Mucosa of descending colon (tissue), 3 donors: ENCODE measurements at regions of chr12 and their contacts with region 1.

Region 1: DNA sequence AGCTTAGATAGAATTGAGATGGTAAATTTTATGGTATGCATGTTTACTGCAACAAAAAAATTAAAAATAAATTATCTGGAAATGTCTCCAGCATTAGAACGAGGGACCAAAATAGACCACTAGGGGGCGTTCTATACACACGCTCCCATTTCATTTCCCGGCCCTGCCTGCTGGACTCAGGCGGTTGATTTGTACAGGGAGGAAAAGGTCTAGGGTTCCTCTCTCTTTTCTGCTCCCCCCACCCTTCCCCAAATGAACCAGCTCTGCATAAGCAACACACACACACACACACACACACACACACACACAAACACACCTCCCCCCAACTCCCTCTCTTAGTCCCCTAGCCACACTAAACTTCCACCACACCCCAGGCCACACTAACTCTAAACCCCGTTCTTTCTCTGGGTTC is 7.8 kb upstream of the DTX1 start:
- DNase-seq: peak in 1 of 3 donors; percentile 85
- ATAC-seq: peak; percentile 91
- H3K4me3 ChIP-seq: no peak overlapping the region
- H3K4me1 ChIP-seq: no peaks in the 10 kb centered on the region
- CTCF ChIP-seq: peak; percentile 78

Region 2: GRCh38 chr12:113152835-113153814 is 104.4 kb after region 1 on chr12:
- intact Hi-C with region 1: loop called (anchors 5 to 10 kb)
- DNase-seq: peak; percentile 76 to 86 (median 80)
- ATAC-seq: peak; percentile 89
- H3K4me3 ChIP-seq: no peak overlapping the region
- H3K4me1 ChIP-seq: peaks cover 24% of the 10 kb centered on the region
- CTCF ChIP-seq: peak; percentile 50

Region 3: GRCh38 chr12:113174461-113175384 is 126.0 kb after region 1 on chr12:
- intact Hi-C with region 1: loop called (anchors 10 kb)
- DNase-seq: peak; percentile 66 to 85 (median 83)
- ATAC-seq: peak; percentile 92
- H3K4me3 ChIP-seq: no peak overlapping the region
- H3K4me1 ChIP-seq: no peaks in the 10 kb centered on the region
- CTCF ChIP-seq: peak; percentile 98